Activated CD4-positive, alpha-beta T cell treated with anti-CD3 and anti-CD28 coated beads for 36 hours (primary cell): ENCODE measurements at regions of chr12 and their contacts with region 1.

Region 1: GRCh38 chr12:132887513-132888351 is at the start of gene CHFR:
- DNase-seq: peak; percentile 98
- ATAC-seq: peak; percentile 99
- H3K4me3 Mint-ChIP-seq: peak within 1 kb of the TSS; percentile 99
- H3K27ac Mint-ChIP-seq: peak within 1 kb of the TSS; percentile 100
- H3K4me1 Mint-ChIP-seq: peaks cover 21% of the 10 kb centered on the region
- H3K27me3 Mint-ChIP-seq: no peaks in the 10 kb centered on the region
- total RNA-seq, gene CHFR: 36.5 to 36.8 TPM

Region 2: DNA sequence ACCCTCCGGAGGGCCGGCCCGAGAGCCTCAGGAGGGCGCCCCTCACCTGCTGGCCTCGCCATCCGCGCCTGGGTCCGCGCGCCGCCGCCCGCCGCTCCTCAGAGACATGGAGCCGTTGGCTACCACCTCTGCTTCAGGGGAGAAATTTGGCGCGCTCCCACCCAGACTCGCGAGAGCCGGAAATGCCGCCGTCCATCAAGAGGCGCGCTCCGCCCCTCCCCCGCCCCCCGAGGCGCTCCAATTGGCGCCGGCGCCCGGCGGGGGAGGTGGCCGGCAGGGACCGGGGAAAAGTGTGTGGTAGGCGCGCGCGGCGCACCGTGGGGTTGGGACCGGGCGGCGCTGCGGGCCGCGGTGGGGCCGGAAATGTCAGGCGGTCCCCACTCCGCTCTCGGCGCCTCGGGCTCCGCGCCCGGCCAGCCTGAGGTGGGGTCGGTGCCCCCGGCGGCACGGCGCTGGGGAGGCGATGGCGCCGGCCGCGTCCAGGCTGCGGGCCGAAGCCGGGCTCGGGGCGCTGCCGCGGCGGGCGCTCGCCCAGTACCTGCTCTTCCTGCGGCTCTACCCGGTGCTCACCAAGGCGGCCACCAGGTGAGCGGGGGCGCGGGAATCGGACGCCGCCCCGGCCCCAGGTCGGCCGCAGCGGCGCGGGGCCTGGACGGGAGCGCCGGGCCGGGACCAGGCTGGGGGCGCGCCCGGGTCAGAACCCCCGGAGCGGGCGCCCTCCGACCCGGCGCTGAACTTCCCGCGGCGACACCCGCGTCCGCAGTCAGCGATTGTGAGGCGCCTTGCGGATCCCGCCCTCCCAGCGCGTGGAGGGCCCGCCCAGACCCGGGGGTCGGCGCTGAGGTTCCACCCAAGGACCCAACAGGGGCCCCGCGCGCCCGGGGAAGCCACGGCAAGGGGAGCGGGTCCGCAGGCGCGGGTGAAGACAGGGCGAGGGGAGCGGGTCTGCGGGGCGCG is 200.2 kb before region 1 on chr12 and contains the starts of genes POLE and PXMP2:
- CTCF ChIA-PET with region 1: no interaction called
- POLR2A ChIA-PET with region 1: no interaction called
- intact Hi-C with region 1: loop called in 1 of 2 experiments (anchors 1 kb)
- DNase-seq: peak; percentile 98
- ATAC-seq: peak; percentile 94
- H3K4me3 Mint-ChIP-seq: peak within 1 kb of the TSS; percentile 72
- H3K27ac Mint-ChIP-seq: peak within 1 kb of the TSS; percentile 55
- H3K4me1 Mint-ChIP-seq: peaks cover 19% of the 10 kb centered on the region
- H3K27me3 Mint-ChIP-seq: no peaks in the 10 kb centered on the region
- total RNA-seq, gene POLE: 121 to 124 TPM
- total RNA-seq, gene PXMP2: 12.2 to 14.3 TPM

Region 3: GRCh38 chr12:132761032-132761920 is 126.5 kb before region 1 on chr12 and contains the start of gene ANKLE2:
- CTCF ChIA-PET with region 1: no interaction called
- POLR2A ChIA-PET with region 1: no interaction called
- intact Hi-C with region 1: loop called (anchors 1 to 5 kb)
- DNase-seq: peak; percentile 84
- ATAC-seq: peak; percentile 41
- H3K4me3 Mint-ChIP-seq: peak within 1 kb of the TSS; percentile 90
- H3K27ac Mint-ChIP-seq: peak within 1 kb of the TSS; percentile 98
- H3K4me1 Mint-ChIP-seq: peaks cover 33% of the 10 kb centered on the region
- H3K27me3 Mint-ChIP-seq: no peaks in the 10 kb centered on the region
- total RNA-seq, gene ANKLE2: 110 to 111 TPM

Region 4: DNA sequence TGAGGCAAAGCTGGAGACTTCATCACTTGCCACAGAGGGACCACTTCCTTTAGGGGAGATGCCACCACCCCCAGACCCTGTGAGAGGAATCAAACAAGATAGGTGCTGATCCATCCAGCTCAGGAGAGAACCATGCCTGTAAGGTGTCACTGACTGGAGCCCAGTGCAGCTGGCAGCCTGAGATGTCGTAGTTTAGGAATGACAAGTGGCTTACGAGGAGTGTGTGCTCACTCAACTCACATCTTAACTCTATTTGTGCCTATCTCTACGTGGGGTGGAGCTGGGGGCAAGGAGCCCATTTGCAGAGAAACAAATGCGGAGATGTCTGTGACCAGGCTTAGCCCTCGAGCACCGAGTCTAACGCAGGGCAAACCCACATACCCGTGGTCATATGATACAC is 26.2 kb before region 1 on chr12:
- CTCF ChIA-PET with region 1: no interaction called
- POLR2A ChIA-PET with region 1: no interaction called
- intact Hi-C with region 1: no loop called
- DNase-seq: no peak
- ATAC-seq: no peak
- H3K4me3 Mint-ChIP-seq: no peak overlapping the region
- H3K27ac Mint-ChIP-seq: peak overlapping the region; percentile 25
- H3K4me1 Mint-ChIP-seq: peaks cover 6% of the 10 kb centered on the region
- H3K27me3 Mint-ChIP-seq: no peaks in the 10 kb centered on the region

Region 5: DNA sequence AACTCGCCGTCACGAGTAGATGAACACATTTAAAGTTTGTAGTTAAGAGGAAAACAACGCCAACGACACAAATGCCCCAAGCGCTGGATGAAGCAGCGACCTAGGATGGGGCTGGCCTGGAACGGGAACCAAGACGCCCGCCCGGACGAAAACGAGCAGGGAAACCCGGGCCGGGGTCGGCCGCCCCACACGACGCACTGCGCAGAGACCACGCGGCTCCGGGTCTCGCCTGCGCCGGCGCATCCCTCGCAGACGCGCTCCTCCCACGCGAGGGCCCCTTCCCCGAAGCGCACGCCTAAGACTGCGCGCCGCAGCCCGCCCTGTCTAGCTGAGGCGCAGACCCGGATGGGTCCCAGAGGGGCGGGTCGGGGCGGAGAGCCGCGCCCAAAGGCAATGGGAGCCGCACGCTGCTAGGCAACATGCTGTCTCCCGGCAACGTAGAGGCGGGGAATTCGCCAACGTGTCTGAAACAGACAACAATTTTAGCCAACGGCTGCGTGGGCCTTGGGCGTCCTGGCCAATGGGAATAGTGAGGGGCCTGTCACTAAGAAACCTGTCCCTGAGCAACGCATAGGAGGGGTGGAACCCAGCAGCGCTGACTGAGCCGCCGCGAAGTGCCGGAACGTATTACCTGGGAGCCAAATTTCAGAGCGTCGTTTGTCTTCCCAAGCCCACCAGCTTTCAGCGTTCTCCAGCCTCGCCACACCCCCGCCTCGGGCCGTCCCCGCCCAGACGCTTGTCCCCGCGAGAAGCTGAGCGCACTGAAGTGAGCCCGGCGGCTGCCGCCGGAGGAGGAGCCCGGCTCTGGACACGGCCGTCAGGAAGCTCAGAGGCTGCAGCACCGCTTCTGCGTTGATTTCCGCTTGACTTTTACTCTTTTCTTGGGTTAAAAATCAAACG is 20.7 kb after region 1 on chr12:
- CTCF ChIA-PET with region 1: interaction called, 10 read pairs
- POLR2A ChIA-PET with region 1: interaction called, 6 read pairs
- intact Hi-C with region 1: loop called (anchors 1 kb)
- DNase-seq: peak; percentile 99
- ATAC-seq: peak; percentile 94
- H3K4me3 Mint-ChIP-seq: peak overlapping the region; percentile 84
- H3K27ac Mint-ChIP-seq: peak overlapping the region; percentile 88
- H3K4me1 Mint-ChIP-seq: peaks cover 17% of the 10 kb centered on the region
- H3K27me3 Mint-ChIP-seq: peaks cover 2% of the 10 kb centered on the region

Region 6: DNA sequence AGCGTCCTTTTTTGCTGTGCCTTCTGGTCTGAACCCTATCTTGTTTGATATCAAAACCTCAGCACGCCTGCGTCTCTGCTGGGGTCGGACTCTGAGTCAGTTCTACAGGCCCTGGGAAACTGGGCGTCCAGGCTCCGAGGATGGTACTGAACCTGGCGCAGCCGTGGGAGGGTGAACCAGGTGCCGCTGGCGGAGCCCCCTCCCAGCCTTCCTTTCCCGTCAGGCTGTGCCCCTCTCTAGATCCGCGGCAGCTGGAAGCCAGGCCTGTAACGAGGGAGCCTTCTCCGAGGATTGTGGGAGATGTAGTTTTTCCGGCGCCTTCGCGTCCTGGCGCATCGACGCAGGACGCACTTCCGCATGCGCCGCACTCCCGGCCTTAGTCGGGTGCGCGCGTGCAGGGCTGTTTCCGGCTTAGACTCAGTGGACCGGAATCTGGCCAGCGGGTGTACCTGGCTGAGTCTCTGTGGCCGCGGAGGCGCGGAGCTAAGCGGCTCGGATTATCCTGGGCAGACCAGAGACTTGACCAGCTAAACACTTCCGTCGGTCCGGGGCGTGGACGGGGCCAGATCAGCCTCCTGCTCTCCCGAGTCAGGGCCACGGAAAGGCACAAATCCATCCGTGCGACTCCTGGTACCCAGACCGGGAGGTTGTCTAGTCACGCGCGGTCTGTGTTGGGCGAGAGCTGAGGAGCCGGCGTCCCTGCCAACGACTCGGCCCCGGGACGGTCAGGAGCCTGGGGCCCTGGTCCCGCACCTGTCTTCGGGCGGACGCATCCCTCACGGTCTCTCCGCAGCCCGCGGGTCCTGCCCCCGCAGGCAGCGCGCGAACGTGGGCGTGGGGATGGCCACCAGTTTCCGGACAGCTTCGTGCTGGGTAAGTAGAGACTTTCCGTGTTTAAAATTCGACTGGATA is 98.5 kb after region 1 on chr12 and contains the start of gene ZNF26:
- CTCF ChIA-PET with region 1: interaction called, 3 read pairs
- POLR2A ChIA-PET with region 1: no interaction called
- intact Hi-C with region 1: loop called in 1 of 2 experiments (anchors 1 kb)
- DNase-seq: peak; percentile 94
- ATAC-seq: peak; percentile 97
- H3K4me3 Mint-ChIP-seq: peak within 1 kb of the TSS; percentile 79
- H3K27ac Mint-ChIP-seq: peak within 1 kb of the TSS; percentile 96
- H3K4me1 Mint-ChIP-seq: peaks cover 26% of the 10 kb centered on the region
- H3K27me3 Mint-ChIP-seq: peaks cover 4% of the 10 kb centered on the region
- total RNA-seq, gene ZNF26: 12.3 to 17.0 TPM

Region 7: DNA sequence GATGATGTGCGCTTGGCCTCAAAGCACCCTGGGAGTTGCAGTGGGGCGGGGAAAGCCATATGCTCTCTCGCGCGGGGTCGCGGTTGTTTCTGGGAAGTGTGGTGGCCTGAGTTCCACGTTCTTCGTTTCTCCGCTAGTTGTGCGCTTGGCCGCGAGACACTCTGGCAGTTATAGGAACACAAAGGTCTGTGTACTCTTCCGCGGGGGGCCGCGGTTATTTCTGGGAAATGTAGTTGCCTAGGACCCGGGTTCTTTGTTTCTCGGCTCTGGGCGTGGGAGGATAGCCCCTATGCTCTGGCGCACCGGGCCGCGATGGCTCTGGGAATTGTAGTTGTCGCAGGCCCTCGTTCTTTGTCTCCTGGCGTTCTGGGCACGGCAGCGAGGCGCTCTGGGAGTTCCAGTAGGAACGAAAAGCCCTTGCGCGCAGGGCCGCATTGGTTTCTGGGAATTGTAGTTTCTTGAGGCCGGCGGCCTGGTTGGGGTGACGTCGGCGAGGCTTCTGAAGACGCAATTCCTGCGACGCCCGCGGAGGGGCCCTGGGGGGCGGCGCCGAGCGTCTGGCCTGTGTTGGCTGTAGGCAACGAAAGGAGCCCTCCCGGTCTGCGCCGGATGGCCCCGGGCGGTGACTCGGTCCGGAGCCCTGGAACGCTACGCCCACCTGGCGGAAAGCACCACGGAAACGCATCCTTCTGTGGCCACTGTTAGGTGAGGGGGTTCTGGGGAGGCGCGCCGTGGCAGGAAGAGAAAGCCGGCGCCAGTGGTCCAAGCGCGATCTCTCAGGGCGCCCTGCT is 192.8 kb after region 1 on chr12 and contains the start of gene ZNF140:
- CTCF ChIA-PET with region 1: no interaction called
- POLR2A ChIA-PET with region 1: no interaction called
- intact Hi-C with region 1: loop called (anchors 1 kb)
- DNase-seq: peak; percentile 97
- ATAC-seq: peak; percentile 64
- H3K4me3 Mint-ChIP-seq: no peak within 1 kb of the TSS
- H3K27ac Mint-ChIP-seq: no peak within 1 kb of the TSS
- H3K4me1 Mint-ChIP-seq: peaks cover 13% of the 10 kb centered on the region
- H3K27me3 Mint-ChIP-seq: no peaks in the 10 kb centered on the region
- total RNA-seq, gene ZNF140: 13.3 to 14.3 TPM

Region 8: GRCh38 chr12:133181238-133181959 is 293.7 kb after region 1 on chr12 and contains the start of gene ZNF268:
- CTCF ChIA-PET with region 1: no interaction called
- POLR2A ChIA-PET with region 1: no interaction called
- intact Hi-C with region 1: loop called in 1 of 2 experiments (anchors 1 kb)
- DNase-seq: peak; percentile 95
- ATAC-seq: peak; percentile 96
- H3K4me3 Mint-ChIP-seq: peak within 1 kb of the TSS; percentile 90
- H3K27ac Mint-ChIP-seq: peak within 1 kb of the TSS; percentile 95
- H3K4me1 Mint-ChIP-seq: peaks cover 11% of the 10 kb centered on the region
- H3K27me3 Mint-ChIP-seq: no peaks in the 10 kb centered on the region
- total RNA-seq, gene ZNF268: 14.0 to 14.6 TPM